ENCODE measurements at regions of chr17 and their contacts with region 1.

Region 1: DNA sequence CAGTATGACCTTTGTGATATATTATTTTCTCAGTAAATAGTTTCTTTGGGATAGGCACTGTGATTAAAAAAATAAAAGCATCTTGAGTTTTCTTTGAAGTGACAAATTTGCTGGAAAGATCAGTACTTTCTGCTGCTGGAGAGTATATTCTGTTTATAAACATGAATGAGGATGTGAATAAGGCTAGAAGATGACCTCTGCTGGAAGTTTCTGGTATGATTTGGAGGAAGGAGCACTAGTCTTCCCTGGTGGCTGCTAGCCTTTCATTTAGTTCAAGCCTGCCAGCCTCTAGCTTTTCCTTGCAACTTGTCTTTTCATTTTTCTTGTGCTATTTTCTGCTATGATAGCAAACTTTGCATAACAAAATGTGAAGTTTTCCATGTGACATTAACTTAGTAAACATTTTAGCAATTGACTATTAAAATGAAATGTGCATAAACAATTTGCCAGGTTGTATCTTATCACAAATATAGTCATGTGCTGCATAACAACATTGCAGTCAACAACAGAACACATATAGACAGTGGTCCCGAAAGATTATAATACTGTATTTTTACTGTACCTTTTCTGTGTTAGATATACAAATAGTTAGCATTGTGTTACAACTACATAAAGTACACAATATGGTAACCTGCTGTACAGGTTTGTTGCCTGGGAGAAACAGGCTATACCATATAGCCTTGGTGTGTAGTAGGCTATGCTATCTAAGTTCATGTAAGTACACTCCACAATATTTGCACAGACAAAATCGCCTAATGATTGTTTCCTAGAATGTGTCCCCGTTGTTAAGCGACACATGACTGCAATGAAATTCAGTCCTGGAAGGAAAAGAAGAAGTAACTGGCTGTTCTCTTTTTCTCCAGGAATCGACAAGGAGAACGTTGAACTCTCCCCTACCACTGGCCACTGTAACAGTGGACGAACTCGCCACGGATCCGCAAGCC is 18.1 kb upstream of the RAB11FIP4 start:
- DNase-seq: peak; percentile 70
- H3K4me3 Mint-ChIP-seq: no peak overlapping the region
- H3K27ac Mint-ChIP-seq: no peak overlapping the region
- H3K4me1 Mint-ChIP-seq: no peaks in the 10 kb centered on the region
- H3K27me3 Mint-ChIP-seq: no peaks in the 10 kb centered on the region
- CTCF ChIP-seq: peak; percentile 54

Region 2: DNA sequence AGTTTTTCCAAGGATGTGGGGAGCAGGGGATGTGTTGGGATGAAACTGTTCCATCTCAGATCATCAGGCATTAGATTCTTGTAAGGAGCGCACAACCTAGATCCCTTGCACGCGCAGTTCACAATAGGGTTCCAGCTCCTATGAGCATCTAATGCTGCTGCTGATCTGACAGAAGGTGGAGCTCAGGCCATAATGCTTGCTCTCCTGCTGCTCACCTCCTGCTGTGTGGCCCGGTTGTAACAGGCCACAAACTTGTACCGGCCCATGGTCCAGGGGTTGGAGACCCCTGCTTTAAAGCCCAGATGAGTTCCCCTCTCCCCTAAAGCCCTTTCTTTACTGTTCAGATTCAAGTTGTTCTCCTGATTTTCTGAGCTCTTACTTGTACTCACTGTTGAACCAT is 357.8 kb before region 1 on chr17:
- CTCF ChIA-PET with region 1: no interaction called
- POLR2A ChIA-PET with region 1: no interaction called
- intact Hi-C with region 1: loop called (anchors 2 kb)
- DNase-seq: no peak
- H3K4me3 Mint-ChIP-seq: no peak overlapping the region
- H3K27ac Mint-ChIP-seq: no peak overlapping the region
- H3K4me1 Mint-ChIP-seq: peaks cover 4% of the 10 kb centered on the region
- H3K27me3 Mint-ChIP-seq: no peaks in the 10 kb centered on the region
- CTCF ChIP-seq: no peak

Region 3: DNA sequence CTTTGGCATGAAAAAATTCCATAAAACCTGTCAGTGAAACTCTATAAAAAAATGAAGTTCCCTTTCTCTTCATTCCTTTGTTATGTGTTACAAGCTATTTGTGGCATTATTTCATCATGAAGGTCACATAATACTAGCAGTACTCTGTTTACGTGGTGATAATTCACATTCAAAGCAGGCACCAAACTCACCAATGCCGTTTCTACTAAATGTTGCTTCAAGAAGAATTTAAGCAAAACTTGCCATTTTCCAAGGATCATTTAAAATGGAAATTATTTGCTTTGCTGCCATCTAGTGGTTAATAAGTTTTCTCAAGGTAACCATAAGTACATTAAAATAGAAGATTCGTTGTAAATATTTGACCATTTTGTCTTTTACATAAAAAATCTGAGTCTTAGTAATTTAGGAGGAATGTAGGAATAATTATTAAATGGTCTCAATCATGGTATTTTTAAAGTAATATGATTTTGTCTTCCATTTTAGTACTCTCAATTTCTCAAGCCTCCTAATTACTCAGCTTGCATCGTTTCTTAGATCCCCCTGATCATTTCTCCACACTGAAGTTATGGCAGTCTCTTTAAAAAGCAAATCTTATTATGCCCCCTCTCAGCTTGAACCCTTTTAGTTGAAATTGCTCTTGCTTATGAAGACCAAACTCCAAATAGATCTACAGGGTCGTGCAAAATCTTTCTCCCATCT is 157.2 kb before region 1 on chr17:
- CTCF ChIA-PET with region 1: interaction called, 8 read pairs
- POLR2A ChIA-PET with region 1: no interaction called
- intact Hi-C with region 1: loop called (anchors 2 kb)
- DNase-seq: peak; percentile 52
- H3K4me3 Mint-ChIP-seq: no peak overlapping the region
- H3K27ac Mint-ChIP-seq: no peak overlapping the region
- H3K4me1 Mint-ChIP-seq: no peaks in the 10 kb centered on the region
- H3K27me3 Mint-ChIP-seq: no peaks in the 10 kb centered on the region
- CTCF ChIP-seq: peak; percentile 32

Region 4: DNA sequence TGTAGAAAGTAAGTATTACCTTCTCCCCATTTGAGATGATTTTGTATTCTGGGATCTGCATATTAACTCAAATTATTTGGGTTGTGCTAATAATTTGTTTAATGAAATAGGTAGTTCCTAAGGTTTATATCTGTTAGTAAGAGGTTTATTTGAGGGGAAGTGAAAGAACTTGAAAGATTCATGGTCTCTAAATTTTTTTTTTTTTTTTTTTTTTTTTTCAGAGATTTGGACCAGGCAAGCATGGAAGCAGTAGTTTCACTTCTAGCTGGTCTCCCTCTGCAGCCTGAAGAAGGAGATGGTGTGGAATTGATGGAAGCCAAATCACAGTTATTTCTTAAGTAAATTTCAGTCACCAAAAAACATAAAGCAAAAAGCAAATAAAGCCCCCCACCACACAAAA is 141.6 kb before region 1 on chr17:
- CTCF ChIA-PET with region 1: no interaction called
- POLR2A ChIA-PET with region 1: no interaction called
- intact Hi-C with region 1: loop called (anchors 5 kb)
- DNase-seq: no peak
- H3K4me3 Mint-ChIP-seq: no peak overlapping the region
- H3K27ac Mint-ChIP-seq: no peak overlapping the region
- H3K4me1 Mint-ChIP-seq: no peaks in the 10 kb centered on the region
- H3K27me3 Mint-ChIP-seq: no peaks in the 10 kb centered on the region
- CTCF ChIP-seq: no peak

Region 5: GRCh38 chr17:31269578-31269983 is 103.8 kb before region 1 on chr17:
- CTCF ChIA-PET with region 1: interaction called, 8 read pairs
- POLR2A ChIA-PET with region 1: interaction called, 3 read pairs
- intact Hi-C with region 1: loop called (anchors 5 kb)
- DNase-seq: peak; percentile 89
- H3K4me3 Mint-ChIP-seq: peak overlapping the region; percentile 38
- H3K27ac Mint-ChIP-seq: peak overlapping the region; percentile 52
- H3K4me1 Mint-ChIP-seq: peaks cover 39% of the 10 kb centered on the region
- H3K27me3 Mint-ChIP-seq: no peaks in the 10 kb centered on the region
- CTCF ChIP-seq: no peak

Region 6: DNA sequence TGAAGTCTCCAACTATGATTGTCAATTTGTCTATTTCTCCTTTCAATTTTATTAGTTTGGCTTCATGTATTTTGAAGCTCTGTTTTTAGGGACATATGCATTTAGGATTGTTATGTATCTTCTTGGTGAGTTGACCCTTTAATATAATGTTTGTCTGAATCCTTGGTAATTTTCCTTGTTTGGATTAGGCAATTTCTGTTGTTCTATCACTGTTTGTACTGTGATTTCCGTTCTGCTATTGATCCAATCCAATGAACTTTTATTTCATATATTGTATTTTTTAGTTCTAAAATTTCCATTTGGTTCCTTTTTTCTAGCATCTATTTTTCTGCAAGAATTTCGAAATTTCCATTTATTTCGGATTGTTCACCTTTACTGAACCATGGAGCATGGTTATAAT is 49.0 kb after region 1 on chr17:
- CTCF ChIA-PET with region 1: no interaction called
- POLR2A ChIA-PET with region 1: no interaction called
- intact Hi-C with region 1: no loop called
- DNase-seq: no peak
- H3K4me3 Mint-ChIP-seq: no peak overlapping the region
- H3K27ac Mint-ChIP-seq: no peak overlapping the region
- H3K4me1 Mint-ChIP-seq: no peaks in the 10 kb centered on the region
- H3K27me3 Mint-ChIP-seq: peaks cover 42% of the 10 kb centered on the region
- CTCF ChIP-seq: no peak

Measured in MCF 10A (cell line).